ENCODE measurements at regions of chr5 and their contacts with region 1.

Region 1: GRCh38 chr5:133868946-133869518 is 99.4 kb downstream of the C5orf15 start:
- DNase-seq: peak; percentile 75
- ATAC-seq: peak; percentile 76 to 90
- H3K4me3 ChIP-seq: no peak overlapping the region
- H3K27ac ChIP-seq: peak overlapping the region; percentile 11 to 59; a peak in 2 of 6 replicates
- H3K4me1 ChIP-seq: peaks cover 16% of the 10 kb centered on the region; the same call in 1 of the 3 replicates
- CTCF ChIP-seq: peak; percentile 91
- EP300 ChIP-seq: no peak
- POLR2A ChIP-seq: no peak
- RAD21 ChIP-seq: peak; percentile 87 to 90

Region 2: GRCh38 chr5:133247881-133248624 is 621.0 kb before region 1 on chr5:
- CTCF ChIA-PET with region 1: interaction called, 12 read pairs
- POLR2A ChIA-PET with region 1: no interaction called
- DNase-seq: peak; percentile 73 to 90
- ATAC-seq: peak; percentile 62 to 85; a peak in 5 of 6 replicates
- H3K4me3 ChIP-seq: no peak overlapping the region
- H3K27ac ChIP-seq: peak overlapping the region; percentile 89 to 94
- H3K4me1 ChIP-seq: peaks cover 74% of the 10 kb centered on the region
- CTCF ChIP-seq: peak; percentile 91
- EP300 ChIP-seq: no peak
- POLR2A ChIP-seq: no peak
- RAD21 ChIP-seq: peak; percentile 93 to 95

Region 3: GRCh38 chr5:133433641-133434040 is 435.4 kb before region 1 on chr5:
- CTCF ChIA-PET with region 1: interaction called, 10 read pairs
- POLR2A ChIA-PET with region 1: no interaction called
- DNase-seq: no peak
- ATAC-seq: no peak
- H3K4me3 ChIP-seq: no peak overlapping the region
- H3K27ac ChIP-seq: no peak overlapping the region
- H3K4me1 ChIP-seq: no peaks in the 10 kb centered on the region
- CTCF ChIP-seq: no peak
- EP300 ChIP-seq: no peak
- POLR2A ChIP-seq: no peak
- RAD21 ChIP-seq: no peak

Region 4: DNA sequence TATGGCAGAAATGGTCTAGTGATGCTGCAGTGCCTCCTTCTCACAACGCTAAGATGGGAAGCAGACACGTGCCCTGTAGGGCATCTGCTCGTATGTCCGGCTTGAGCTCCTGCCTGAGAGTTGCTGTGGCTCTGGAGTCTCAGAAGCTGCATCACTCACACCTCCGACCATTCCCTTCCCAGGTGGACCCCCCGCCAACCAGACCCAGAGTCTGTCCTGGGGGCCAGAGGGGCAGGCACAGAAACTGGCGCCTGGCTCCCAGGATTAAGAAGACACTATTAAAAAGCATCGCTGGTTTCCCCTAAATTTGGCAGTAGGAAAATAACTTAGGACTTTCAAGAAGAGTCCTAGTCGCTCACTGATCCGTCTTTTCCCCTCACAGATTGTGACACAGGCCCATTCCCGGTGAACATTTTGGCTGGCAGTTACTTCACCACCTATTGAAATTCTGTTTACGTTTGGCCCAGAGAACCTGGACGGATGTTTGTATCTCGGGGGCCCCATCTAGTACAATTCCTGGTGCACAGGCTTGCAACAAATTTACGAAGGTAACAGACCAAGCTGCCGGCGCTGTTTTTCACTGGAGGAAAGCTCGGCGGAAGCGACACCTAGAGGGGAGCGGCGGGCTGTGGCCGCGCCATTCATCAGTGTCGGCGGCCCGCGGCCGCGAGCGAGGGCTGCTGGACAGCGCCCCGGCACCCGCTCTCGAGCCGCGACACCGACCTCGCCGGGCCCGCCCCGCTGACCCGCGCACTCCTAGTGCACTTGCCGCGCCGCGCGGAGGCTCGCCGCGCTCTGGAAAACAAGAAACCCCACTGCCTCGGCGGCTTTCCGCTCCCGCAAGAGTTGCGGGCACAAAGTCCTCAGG is 258.3 kb before region 1 on chr5:
- CTCF ChIA-PET with region 1: interaction called, 24 read pairs
- POLR2A ChIA-PET with region 1: no interaction called
- DNase-seq: peak; percentile 61 to 82
- ATAC-seq: peak; percentile 89 to 96
- H3K4me3 ChIP-seq: peak overlapping the region; percentile 65
- H3K27ac ChIP-seq: no peak overlapping the region
- H3K4me1 ChIP-seq: peaks cover 11% of the 10 kb centered on the region
- CTCF ChIP-seq: peak; percentile 66
- EP300 ChIP-seq: no peak
- POLR2A ChIP-seq: no peak
- RAD21 ChIP-seq: peak; percentile 58 to 64

Region 5: GRCh38 chr5:133825631-133826289 is 43.3 kb before region 1 on chr5:
- CTCF ChIA-PET with region 1: interaction called, 12 read pairs
- POLR2A ChIA-PET with region 1: no interaction called
- DNase-seq: no peak
- ATAC-seq: no peak
- H3K4me3 ChIP-seq: no peak overlapping the region
- H3K27ac ChIP-seq: no peak overlapping the region
- H3K4me1 ChIP-seq: peaks cover 8% of the 10 kb centered on the region; the same call in 1 of the 3 replicates
- CTCF ChIP-seq: no peak
- EP300 ChIP-seq: no peak
- POLR2A ChIP-seq: no peak
- RAD21 ChIP-seq: no peak

Region 6: DNA sequence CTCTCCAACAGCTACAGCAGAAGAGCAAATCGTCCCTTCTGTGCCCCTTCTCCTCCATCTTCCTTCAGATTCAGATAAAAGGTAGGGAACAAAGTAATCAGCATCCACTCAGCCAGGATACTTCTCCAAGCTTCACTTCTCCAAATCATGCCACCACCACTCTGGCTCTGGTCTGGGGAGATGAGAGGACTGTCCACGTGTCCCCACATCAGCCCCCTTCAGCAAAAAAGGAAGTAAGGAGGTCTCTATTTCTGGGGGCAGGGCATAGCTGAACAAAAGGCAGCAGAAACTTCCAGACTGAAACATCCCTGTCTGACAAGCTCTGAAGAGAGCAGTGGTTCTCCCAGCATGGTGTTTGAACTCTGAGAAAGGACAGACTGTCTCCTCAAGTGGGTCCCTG is 17.5 kb before region 1 on chr5:
- CTCF ChIA-PET with region 1: interaction called, 13 read pairs
- POLR2A ChIA-PET with region 1: no interaction called
- DNase-seq: no peak
- ATAC-seq: no peak
- H3K4me3 ChIP-seq: no peak overlapping the region
- H3K27ac ChIP-seq: no peak overlapping the region
- H3K4me1 ChIP-seq: no peaks in the 10 kb centered on the region
- CTCF ChIP-seq: no peak
- EP300 ChIP-seq: no peak
- POLR2A ChIP-seq: no peak
- RAD21 ChIP-seq: no peak

Region 7: GRCh38 chr5:133895979-133896845 is 27.2 kb after region 1 on chr5:
- CTCF ChIA-PET with region 1: interaction called, 17 read pairs
- POLR2A ChIA-PET with region 1: no interaction called
- DNase-seq: no peak
- ATAC-seq: no peak
- H3K4me3 ChIP-seq: no peak overlapping the region
- H3K27ac ChIP-seq: no peak overlapping the region
- H3K4me1 ChIP-seq: no peaks in the 10 kb centered on the region
- CTCF ChIP-seq: no peak
- EP300 ChIP-seq: no peak
- POLR2A ChIP-seq: no peak
- RAD21 ChIP-seq: no peak